Cardiac septum (tissue), 1 donor: ENCODE measurements at regions of chr15 and their contacts with region 1.

Region 1: DNA sequence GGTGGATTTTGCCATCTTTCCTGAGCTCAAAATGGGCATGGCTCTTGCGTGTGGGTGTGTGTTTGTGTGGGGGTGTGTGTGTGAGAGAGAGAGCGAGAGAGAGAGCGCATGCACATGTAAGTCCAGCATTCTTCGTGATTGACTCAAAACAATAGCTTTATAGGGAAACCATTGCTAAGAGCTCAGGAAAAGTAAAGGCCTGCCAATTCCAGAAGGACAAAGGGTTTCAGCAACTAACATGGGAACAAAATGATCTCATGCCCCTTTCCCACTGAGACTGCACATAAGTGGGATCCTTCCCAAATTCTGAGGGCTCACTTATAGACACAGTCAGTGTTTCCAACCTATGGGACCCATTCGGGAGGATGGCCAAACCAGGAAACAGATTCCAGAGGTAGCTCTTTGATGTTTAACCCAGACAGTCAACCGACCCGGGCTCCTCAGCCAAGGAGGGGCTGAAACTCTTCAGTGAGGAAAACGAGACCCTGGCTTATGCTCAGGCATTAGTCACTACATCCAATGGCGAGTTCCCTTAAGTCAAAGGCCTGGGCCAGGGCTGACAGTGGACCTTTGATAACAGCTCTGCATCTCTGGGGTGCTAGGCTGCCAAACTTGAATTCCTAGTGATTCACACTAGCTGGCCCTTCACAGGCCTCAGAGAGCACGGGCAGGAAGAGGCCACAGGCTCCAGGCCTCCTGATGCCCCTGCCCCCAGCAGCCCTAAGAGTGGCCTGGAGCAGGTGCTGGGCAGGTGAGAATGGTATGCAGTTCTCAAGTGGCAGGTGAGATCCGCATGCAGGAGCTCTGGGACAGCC is 305.0 kb upstream of the C2CD4B start:
- DNase-seq: no peak

Region 2: DNA sequence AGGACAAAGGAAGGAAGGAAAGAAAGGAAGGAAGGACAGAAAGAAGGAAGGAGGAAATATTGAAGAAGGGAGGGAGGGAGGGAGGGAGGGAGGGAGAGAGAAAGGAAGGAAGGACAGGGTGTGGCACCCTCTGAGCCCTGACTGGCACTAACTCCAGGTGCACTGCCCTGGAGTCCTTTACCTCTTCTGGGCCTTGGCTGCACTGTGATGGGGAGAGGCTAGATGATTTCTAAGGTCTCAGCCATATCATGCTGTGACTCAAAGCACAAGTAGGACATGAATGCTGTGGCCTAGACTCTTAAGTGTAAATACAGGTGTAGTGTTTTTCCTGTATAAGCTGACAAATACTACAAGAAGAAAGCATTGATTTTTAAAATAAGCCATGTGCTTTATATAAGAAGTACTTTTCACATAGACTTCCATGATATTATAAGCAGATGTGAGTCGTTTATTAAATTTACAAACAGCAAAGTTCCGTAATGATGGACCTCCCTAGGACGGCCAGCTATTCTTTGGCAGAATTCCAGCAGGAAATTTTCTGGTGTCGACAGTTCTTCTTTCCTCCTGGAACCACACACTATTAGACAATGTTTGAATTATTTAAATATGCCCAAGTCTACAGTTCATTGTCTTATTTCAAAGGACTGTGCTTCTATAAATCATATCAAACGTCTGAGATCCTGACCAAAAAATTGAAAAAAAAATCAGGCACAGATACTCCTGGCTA is 91.1 kb before region 1 on chr15:
- intact Hi-C with region 1: no loop called
- DNase-seq: no peak

Region 3: DNA sequence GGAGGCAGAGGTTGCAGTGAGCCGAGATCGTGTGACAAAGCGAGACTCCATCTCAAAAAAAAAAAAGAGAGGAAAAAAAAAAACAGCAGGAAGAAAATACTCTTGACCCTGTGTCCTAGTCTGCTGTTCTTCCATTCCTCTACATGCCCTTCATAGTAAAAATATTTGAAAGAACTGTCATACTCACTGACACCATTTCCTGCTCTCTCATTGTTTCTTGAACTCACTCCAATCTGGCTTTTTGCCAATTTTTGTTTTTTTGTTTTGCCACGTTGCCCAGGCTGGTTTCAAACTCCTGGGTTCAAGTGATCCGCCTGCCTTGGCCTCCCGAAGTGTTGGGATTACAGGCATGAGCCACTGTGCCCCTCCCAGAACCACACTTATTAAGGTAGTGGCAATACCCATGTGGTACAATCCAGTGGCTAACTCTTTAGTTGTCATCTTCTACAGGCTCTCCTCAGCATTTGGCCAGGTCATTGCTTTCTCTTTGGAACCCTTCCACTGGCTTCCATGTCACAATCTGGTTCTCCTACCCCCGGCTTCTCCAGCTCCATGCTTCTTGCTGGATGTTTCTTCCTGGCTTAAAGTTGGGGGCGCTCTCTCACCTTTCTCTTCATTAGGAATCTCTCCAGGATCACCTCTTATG is 66.8 kb before region 1 on chr15:
- intact Hi-C with region 1: no loop called
- DNase-seq: no peak

Region 4: DNA sequence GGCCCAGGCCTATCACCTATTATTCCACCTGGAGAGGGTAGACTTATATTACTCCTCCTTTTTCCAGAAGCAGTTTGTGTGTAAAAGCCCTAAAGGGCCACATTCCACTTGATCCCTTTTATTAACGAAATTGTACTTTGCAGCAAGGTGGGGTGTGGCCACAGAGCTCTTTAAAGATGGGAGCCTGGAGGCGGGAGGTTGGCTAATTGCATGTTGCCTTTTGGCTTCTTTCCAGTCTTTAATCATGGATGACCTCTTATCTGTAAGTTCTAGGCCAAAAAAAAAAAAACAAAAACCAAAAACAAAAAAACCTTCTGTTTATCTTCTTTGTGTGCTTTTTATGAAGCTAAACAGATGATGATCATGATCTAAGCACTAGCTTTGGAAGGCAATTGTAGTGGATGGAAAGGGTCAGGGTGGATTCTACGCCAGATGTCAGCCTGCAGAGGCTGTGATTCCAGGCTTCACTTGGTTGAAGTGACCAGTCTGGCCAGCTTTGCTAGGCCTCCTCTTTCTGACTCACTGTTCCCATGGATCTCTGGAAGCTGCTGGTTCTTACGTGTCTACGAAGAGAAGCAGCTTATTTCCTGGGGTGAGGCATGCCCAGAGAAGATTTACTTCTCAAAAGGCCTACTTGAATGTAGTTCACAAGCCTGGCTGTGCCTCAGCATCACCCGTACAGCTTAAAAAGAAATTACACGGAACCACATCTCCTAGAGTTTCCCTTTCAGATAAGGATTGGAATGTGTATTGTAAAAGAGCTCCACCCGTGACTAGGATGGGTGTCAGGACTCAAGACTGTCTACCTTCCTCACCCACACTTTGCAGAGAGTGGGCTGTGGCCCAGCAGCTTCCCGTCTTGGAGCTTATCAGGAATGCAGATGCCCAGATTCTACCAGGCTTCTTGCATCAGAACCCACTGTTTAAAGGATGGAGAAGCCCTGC is 25.9 kb after region 1 on chr15:
- intact Hi-C with region 1: no loop called
- DNase-seq: no peak

Region 5: DNA sequence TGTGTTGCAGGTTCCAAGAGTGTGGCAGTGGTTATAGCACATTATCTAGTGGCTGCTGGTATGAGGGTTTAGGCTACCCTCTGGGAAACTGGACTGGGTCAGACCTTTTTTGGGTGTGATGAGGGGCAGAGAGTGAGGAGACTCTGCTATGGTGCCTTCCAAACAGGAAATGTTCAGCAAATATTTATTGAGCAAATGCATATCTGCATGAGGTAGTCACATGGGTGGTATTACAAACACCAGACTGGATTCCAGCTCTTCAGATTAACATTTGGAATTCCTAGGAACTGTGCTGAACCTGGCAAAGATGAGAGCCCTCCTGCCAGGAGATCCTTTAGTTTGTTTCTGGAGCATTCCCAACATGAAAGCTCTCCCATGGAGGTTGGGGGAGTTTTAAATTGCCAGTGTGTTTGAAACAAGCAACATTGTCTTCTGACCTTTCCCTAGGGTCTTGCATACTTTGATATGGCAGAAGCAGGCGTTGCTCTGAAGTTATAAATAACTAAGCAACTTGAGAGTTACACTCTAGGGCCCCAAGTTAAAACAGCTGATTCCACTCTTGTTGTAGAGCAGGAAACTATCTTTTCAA is 36.2 kb after region 1 on chr15:
- intact Hi-C with region 1: loop called (anchors 5 kb)
- DNase-seq: no peak